ENCODE measurements at regions of chr20 and their contacts with region 1.

Region 1: GRCh38 chr20:237489-237888 is 10.4 kb downstream of the DEFB129 start:
- DNase-seq: peak; percentile 67 to 93 (median 88)
- H3K4me3 ChIP-seq: peak overlapping the region in 6 of 7 experiments; percentile 16 to 74 (median 54)
- H3K27ac ChIP-seq: peak overlapping the region; percentile 10 to 50
- H3K4me1 ChIP-seq: peaks cover 6 to 22% (median 16%) of the 10 kb centered on the region in 4 experiments
- H3K27me3 ChIP-seq: no peaks in the 10 kb centered on the region

Region 2: DNA sequence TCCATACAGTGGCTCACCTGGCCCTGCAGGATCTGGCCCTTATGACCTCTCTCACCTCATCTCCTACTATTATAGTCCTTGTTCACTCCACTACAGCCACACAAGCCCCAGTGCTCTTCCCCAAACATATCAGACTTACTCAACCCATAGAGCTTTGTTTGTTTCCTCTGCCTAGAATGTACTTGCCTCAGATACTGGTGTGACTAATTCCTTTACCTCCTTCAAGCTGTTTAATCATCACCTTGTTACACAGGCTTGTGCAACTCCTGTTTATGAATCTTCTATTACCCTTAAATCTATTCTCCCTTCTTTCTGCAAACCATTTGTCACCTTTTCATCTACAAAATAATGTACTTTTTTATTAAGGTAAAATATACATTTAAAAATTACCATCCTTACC is 146.8 kb before region 1 on chr20:
- CTCF ChIA-PET with region 1: no interaction called
- POLR2A ChIA-PET with region 1: no interaction called
- DNase-seq: no peak
- H3K4me3 ChIP-seq: no peak overlapping the region
- H3K27ac ChIP-seq: no peak overlapping the region
- H3K4me1 ChIP-seq: no peaks in the 10 kb centered on the region
- H3K27me3 ChIP-seq: peaks cover 2 to 26% (median 6%) of the 10 kb centered on the region in 5 experiments

Region 3: DNA sequence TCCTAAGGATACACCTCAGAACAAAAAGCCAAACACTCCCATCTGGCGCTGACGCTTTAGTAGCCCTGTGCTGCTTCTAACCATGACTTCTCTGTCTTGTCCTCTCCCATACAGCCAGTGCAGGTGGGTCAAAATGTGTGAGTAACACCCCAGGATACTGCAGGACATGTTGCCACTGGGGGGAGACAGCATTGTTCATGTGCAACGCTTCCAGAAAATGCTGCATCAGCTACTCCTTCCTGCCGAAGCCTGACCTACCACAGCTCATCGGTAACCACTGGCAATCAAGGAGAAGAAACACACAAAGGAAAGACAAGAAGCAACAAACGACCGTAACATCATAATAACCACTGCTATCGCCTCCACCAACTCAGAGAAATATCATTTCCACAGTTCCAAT is 21.5 kb after region 1 on chr20:
- CTCF ChIA-PET with region 1: interaction called, 27 read pairs
- POLR2A ChIA-PET with region 1: interaction called, 5 read pairs
- DNase-seq: peak; percentile 45 to 70 (median 67)
- H3K4me3 ChIP-seq: no peak overlapping the region
- H3K27ac ChIP-seq: no peak overlapping the region
- H3K4me1 ChIP-seq: peaks cover 0 to 11% (median 0%) of the 10 kb centered on the region in 4 experiments
- H3K27me3 ChIP-seq: no peaks in the 10 kb centered on the region